ENCODE measurements at regions of chr6 and their contacts with region 1.

Region 1: GRCh38 chr6:87049779-87050178 is 45.1 kb downstream of the CGA start:
- DNase-seq: no peak
- ATAC-seq: no peak
- H3K4me3 ChIP-seq: no peak overlapping the region
- H3K27ac ChIP-seq: no peak overlapping the region
- H3K4me1 ChIP-seq: no peaks in the 10 kb centered on the region
- H3K27me3 ChIP-seq: peaks cover 12% of the 10 kb centered on the region; the same call in 1 of the 2 replicates
- CTCF ChIP-seq: no peak

Region 2: GRCh38 chr6:85081102-85081501 is 1968.7 kb before region 1 on chr6:
- CTCF ChIA-PET with region 1: no interaction called
- POLR2A ChIA-PET with region 1: no interaction called
- in situ Hi-C with region 1: no loop called
- intact Hi-C with region 1: loop called (anchors 10 kb)
- DNase-seq: no peak
- ATAC-seq: no peak
- H3K4me3 ChIP-seq: no peak overlapping the region
- H3K27ac ChIP-seq: no peak overlapping the region
- H3K4me1 ChIP-seq: no peaks in the 10 kb centered on the region
- H3K27me3 ChIP-seq: peaks cover 2% of the 10 kb centered on the region
- CTCF ChIP-seq: no peak

Region 3: GRCh38 chr6:87122457-87122856 is 72.7 kb after region 1 on chr6:
- CTCF ChIA-PET with region 1: no interaction called
- POLR2A ChIA-PET with region 1: no interaction called
- in situ Hi-C with region 1: no loop called
- intact Hi-C with region 1: no loop called
- DNase-seq: no peak
- ATAC-seq: no peak
- H3K4me3 ChIP-seq: no peak overlapping the region
- H3K27ac ChIP-seq: no peak overlapping the region
- H3K4me1 ChIP-seq: no peaks in the 10 kb centered on the region
- H3K27me3 ChIP-seq: peaks cover 2% of the 10 kb centered on the region; the same call in 1 of the 2 replicates
- CTCF ChIP-seq: no peak